Breast epithelium (tissue), 4 donors: ENCODE measurements at regions of chr20 and their contacts with region 1.

Region 1: GRCh38 chr20:17542993-17543412 is 11.8 kb upstream of the BFSP1 start:
- DNase-seq: no peak
- H3K4me3 ChIP-seq: no peak overlapping the region
- H3K27ac ChIP-seq: peak overlapping the region; percentile 75
- H3K4me1 ChIP-seq: peaks cover 0 to 6% of the 10 kb centered on the region in 2 donors
- H3K27me3 ChIP-seq: no peaks in the 10 kb centered on the region
- CTCF ChIP-seq: no peak
- POLR2A ChIP-seq: no peak

Region 2: DNA sequence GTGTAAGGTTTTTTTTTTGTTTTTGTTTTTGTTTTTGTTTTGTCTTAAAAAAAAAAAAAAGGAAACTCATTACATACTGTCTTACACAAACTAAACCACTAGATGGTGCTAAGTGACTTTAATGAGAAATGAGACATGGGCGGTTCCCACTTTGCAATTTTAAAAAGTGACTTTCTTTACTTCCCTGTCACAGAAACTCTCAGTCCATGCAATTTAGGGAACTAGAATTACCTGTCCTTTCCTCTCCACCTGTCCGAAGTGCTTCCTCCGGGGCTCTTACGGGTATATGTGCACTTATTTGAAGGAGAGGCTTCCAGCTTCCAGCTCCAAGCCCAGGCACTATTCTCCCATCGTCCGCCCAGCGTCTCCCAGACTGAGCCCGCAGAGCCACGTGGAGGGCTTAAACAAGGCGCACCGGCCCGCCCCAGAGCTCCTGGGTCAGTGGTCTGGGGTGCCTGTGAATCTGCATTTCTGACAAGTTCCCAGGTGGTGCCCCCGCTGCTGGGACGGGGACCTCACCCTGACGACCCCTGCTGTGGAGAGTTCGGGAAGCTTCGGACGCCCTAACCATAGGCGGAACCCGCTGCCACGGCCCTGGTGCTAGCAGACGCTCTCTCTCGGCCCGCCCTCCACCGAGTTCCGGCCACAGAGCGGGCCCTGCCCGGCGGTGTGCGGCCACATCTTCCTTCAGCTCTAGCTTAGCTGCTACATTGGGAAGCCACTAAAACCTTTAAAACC is 37.9 kb before region 1 on chr20:
- intact Hi-C with region 1: no loop called
- DNase-seq: peak in 1 of 2 donors; percentile 21
- H3K4me3 ChIP-seq: peak overlapping the region; percentile 46 to 77 (median 48)
- H3K27ac ChIP-seq: no peak overlapping the region
- H3K4me1 ChIP-seq: no peaks in the 10 kb centered on the region
- H3K27me3 ChIP-seq: no peaks in the 10 kb centered on the region
- CTCF ChIP-seq: peak in 2 of 3 donors; percentile 60 to 71
- POLR2A ChIP-seq: no peak

Region 3: GRCh38 chr20:17556837-17557654 is 14.0 kb after region 1 on chr20:
- intact Hi-C with region 1: loop called (anchors 1 kb)
- DNase-seq: peak; percentile 93 to 95
- H3K4me3 ChIP-seq: peak overlapping the region in 2 of 3 donors; percentile 10 to 44
- H3K27ac ChIP-seq: peak overlapping the region; percentile 92 to 93
- H3K4me1 ChIP-seq: peaks cover 9 to 13% of the 10 kb centered on the region in 2 donors
- H3K27me3 ChIP-seq: no peaks in the 10 kb centered on the region
- CTCF ChIP-seq: no peak
- POLR2A ChIP-seq: no peak

Region 4: DNA sequence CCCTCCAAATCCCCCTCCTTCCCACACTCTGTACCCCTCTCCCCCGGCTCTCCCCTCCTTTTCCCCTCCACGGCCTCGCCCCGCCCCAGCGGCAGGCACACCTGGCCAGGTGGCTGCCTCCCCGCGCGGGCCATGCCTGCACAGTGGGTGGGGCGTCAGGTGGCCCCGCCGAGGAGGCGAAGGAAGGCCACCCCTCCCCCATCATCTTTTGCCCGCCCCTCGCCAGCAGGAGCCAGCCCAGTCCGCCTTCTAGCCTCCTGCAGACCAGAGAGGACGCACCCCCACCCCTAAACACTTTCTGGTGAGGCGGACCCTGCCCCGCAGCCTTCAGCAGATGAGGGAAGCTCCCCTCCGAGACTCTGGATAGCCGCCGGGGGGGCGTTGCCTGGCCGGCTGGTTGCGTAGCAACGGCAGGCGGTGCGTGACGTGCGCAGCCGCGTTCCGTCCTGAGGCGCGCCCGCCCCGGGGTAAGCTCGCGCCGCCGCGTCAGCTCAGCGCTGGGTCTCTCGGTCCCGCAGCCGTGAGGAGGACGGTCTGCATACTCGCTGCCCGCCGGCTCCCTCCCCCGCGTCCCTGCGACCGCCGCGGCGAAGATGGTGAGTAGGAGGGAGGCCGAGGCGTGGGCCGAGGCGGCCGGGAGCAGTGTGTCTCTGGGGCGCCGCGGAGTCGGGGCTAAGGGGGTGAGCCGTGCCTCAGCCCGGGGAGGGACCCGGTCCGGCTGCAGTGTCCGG is 26.8 kb after region 1 on chr20 and contains the start of gene DSTN:
- intact Hi-C with region 1: no loop called
- DNase-seq: peak; percentile 93 to 94
- H3K4me3 ChIP-seq: peak within 1 kb of the TSS; percentile 88 to 100 (median 95)
- H3K27ac ChIP-seq: peak within 1 kb of the TSS; percentile 100
- H3K4me1 ChIP-seq: peaks cover 0 to 13% of the 10 kb centered on the region in 2 donors
- H3K27me3 ChIP-seq: no peaks in the 10 kb centered on the region
- CTCF ChIP-seq: no peak
- POLR2A ChIP-seq: peak; percentile 89
- total RNA-seq, gene DSTN: 180 to 384 (median 272) TPM